PC-3 (cell line): ENCODE measurements at regions of chr14 and their contacts with region 1.

Region 1: DNA sequence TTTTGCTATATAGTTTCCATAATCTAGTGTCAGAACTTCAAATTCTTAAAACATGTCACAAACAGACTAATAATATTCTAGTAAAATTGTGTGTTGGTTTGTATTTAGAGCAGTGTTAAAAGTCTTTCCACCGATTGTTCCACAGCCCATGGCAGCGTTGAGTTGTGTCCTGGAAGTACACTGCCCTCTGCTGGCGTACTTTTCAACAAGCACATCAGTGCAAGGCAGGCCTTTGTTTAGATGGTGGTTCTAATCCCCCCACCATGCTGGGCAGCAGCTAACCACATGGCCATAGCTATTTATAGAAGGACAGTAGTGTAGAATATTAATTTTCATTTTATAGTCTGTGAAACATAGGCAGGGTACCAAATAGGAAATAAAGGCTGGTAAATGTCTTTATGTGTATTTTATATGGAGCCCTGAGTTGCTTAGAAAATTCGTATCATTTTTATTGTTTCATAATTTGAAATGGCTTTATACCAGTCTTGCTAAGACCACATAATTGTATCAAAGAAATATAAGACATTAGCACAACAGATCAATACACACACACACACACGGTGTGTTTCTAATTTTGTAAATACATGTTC is 235.4 kb downstream of the SEC23A start:
- DNase-seq: peak; percentile 80
- ATAC-seq: peak; percentile 95
- H3K4me3 ChIP-seq: no peak overlapping the region
- H3K27ac ChIP-seq: no peak overlapping the region
- H3K4me1 ChIP-seq: no peaks in the 10 kb centered on the region
- H3K27me3 ChIP-seq: peaks cover 9% of the 10 kb centered on the region; the same call in 1 of the 2 replicates
- CTCF ChIP-seq: peak; percentile 94

Region 2: DNA sequence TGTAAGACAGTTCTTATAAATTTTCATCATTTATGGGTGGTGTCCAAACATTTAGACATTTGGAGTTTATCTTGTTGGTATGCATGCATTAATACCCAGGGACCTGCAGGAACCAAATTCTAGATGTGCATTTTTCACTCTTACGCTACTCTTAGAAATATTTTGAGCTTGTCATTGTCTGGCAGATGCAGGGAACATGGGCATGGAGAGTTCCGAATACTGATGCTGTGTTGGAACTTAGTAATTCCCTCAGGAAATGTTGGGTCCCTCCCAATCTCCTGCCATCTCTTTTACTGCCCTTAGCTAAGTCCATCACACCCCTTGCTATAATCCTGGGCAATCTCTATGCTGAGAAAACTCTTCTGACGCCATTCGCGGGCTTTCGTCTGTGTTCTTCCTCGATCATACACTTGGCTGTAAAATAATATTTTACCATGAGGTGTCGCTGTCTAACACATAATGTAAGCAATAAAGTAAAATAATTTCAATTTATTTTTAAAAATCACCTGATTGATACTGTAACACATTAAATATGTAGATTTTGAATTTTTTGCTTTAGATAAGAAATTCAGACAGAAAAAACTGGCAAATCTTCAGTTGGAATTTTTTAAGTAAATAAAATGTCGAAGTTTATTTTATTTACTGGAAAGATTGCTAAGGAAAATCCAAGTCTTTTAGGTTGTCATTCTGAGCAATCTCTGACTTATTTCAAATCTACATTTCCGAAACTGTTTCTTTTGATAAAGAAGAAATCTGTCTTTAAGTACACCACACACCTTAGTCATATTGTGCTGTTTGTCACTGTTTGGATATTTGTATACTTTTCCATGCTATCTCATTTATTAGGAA is 964.1 kb before region 1 on chr14:
- CTCF ChIA-PET with region 1: no interaction called
- POLR2A ChIA-PET with region 1: no interaction called
- intact Hi-C with region 1: loop called (anchors 5 kb)
- DNase-seq: peak; percentile 83
- ATAC-seq: peak; percentile 78
- H3K4me3 ChIP-seq: peak overlapping the region; percentile 18; the same call in 1 of the 2 replicates
- H3K27ac ChIP-seq: no peak overlapping the region
- H3K4me1 ChIP-seq: no peaks in the 10 kb centered on the region
- H3K27me3 ChIP-seq: peaks cover 24% of the 10 kb centered on the region; the same call in 1 of the 2 replicates
- CTCF ChIP-seq: peak; percentile 82

Region 3: GRCh38 chr14:38605193-38606114 is 262.2 kb before region 1 on chr14:
- CTCF ChIA-PET with region 1: no interaction called
- POLR2A ChIA-PET with region 1: no interaction called
- intact Hi-C with region 1: loop called (anchors 10 kb)
- DNase-seq: peak; percentile 34
- ATAC-seq: no peak
- H3K4me3 ChIP-seq: no peak overlapping the region
- H3K27ac ChIP-seq: no peak overlapping the region
- H3K4me1 ChIP-seq: no peaks in the 10 kb centered on the region
- H3K27me3 ChIP-seq: no peaks in the 10 kb centered on the region
- CTCF ChIP-seq: peak; percentile 55

Region 4: DNA sequence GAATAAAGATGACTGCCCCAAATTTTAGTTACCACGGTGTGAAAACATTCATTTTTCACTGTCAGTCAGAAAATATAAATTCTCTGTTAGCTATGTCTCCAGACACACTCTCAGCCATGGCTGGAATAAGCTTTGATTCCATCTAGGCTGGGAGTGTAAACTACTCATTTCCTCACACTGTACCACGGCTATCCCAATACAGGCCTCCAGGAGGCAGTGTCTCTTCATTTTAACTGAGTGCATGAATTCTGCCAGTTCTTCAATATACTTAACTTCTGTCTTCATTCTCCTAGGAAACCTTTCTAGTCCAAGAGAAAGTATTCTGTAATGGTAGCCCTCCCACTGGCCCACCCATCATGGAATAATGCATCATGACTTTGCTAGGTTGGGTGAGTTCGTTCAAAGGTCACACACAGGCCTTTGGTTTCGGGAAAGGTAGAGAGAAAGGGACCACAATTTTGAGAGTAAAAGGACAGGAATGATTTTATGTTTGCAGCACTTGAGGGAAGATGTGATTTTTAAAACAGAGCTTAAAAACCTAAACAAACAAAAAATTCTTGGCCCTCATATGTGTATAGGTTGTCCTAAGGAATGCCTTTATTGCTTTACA is 145.7 kb before region 1 on chr14:
- CTCF ChIA-PET with region 1: interaction called, 3 read pairs
- POLR2A ChIA-PET with region 1: no interaction called
- intact Hi-C with region 1: loop called (anchors 1 kb)
- DNase-seq: peak; percentile 81
- ATAC-seq: peak; percentile 90
- H3K4me3 ChIP-seq: no peak overlapping the region
- H3K27ac ChIP-seq: no peak overlapping the region
- H3K4me1 ChIP-seq: no peaks in the 10 kb centered on the region
- H3K27me3 ChIP-seq: no peaks in the 10 kb centered on the region
- CTCF ChIP-seq: peak; percentile 89

Region 5: DNA sequence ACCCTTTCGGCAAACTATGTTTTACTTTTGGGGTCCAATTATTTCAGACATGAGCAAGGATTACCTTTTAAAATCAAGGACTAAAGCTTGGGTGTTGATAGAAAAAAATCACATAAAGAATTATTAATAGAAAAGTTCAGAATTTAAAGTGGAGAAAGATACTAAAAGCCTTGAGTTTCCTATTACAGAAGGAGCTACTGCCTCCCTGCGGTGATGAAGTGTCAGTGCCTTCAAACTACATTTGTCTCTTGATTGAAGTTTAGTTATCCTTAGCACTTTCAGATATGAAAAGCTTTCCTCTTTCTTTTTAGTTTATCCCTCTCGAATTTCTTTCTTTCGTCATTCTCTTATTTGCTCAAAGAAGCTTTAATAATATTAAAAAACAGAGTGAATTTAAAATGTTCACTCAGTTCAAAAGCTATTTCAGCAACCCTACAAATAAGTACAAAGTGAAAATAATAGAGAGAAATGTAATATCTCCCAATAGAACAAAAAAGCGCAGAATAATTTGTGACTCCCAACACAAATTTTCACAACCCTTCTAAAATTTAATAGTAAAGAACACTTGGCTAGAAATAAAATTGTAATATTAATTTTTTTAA is 147.8 kb after region 1 on chr14:
- CTCF ChIA-PET with region 1: interaction called, 6 read pairs
- POLR2A ChIA-PET with region 1: no interaction called
- intact Hi-C with region 1: loop called (anchors 1 kb)
- DNase-seq: peak; percentile 66
- ATAC-seq: peak; percentile 64; the same call in 1 of the 2 replicates
- H3K4me3 ChIP-seq: no peak overlapping the region
- H3K27ac ChIP-seq: no peak overlapping the region
- H3K4me1 ChIP-seq: no peaks in the 10 kb centered on the region
- H3K27me3 ChIP-seq: no peaks in the 10 kb centered on the region
- CTCF ChIP-seq: peak; percentile 91

Region 6: DNA sequence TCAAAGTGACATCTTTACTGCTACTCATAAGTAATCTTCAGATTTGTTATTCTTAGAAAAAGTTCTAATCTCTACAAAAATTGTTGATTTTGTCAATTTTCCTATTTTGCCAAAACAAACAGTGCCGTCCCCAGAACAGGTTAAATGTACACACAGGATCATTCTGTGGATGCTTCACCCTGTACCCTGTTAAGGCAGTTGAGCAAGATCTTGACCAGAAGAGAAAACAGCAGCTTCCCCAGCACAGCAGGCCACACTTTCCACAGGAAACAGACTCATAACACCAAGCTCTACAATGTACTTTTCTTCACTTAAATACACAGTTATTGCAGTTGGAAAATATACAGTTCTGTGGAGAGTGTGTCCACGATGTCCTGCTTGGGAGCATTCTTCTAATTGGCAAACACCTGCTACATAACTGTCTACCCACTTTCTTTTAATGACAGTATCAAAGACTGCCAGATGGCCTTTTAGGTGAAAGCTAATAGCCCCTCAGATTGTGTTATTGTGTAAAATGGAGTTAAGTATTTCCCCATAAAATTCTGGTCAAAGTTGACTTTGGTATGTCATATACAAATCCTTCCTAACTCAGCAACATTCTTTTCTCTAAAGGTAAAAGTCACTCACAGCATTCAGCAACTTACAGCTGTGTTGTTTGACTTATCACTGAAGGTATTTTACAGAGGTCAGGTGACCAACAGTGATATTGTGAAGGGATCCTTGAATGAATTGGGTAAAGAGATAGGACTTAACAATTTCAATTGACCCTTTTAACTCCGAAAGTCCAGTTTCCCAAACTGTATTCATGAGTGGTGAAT is 158.4 kb after region 1 on chr14:
- CTCF ChIA-PET with region 1: no interaction called
- POLR2A ChIA-PET with region 1: no interaction called
- intact Hi-C with region 1: no loop called
- DNase-seq: no peak
- ATAC-seq: no peak
- H3K4me3 ChIP-seq: no peak overlapping the region
- H3K27ac ChIP-seq: no peak overlapping the region
- H3K4me1 ChIP-seq: no peaks in the 10 kb centered on the region
- H3K27me3 ChIP-seq: no peaks in the 10 kb centered on the region
- CTCF ChIP-seq: no peak